Activated CD8-positive, alpha-beta T cell treated with anti-CD3 and anti-CD28 coated beads, Interleukin-2, amount 10 ng/mL, durations not matched to agents 7 days and 5 days (primary cell): ENCODE measurements at regions of chr20 and their contacts with region 1.

Region 1: DNA sequence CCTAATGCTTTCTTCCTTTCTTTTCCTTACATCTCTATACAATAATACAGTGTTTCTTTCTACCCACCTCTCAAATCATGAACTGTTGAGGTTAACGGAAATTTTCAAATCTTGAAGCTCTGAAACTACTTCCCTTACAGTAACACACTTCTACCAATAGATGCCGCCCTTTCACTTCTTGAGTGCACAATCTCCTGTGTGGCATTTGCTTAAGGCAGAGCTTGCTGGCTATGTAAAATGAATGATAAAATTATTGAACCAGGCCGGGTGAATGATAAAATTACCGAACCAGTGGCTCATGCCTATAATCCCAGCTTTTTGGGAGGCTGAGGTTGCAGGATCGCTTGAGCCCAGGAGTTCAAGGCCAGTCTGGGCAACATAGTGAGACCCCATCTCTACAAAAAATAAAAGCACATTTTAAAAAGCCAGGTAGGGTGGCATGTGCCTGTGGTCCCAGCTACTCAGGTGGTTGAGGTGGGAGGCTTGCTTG is 56.8 kb downstream of the KCNS1 start:
- DNase-seq: peak; percentile 67
- ATAC-seq: peak; percentile 83
- H3K4me3 Mint-ChIP-seq: no peak overlapping the region
- H3K27ac Mint-ChIP-seq: peak overlapping the region; percentile 62
- H3K4me1 Mint-ChIP-seq: peaks cover 51% of the 10 kb centered on the region
- H3K27me3 Mint-ChIP-seq: no peaks in the 10 kb centered on the region

Region 2: DNA sequence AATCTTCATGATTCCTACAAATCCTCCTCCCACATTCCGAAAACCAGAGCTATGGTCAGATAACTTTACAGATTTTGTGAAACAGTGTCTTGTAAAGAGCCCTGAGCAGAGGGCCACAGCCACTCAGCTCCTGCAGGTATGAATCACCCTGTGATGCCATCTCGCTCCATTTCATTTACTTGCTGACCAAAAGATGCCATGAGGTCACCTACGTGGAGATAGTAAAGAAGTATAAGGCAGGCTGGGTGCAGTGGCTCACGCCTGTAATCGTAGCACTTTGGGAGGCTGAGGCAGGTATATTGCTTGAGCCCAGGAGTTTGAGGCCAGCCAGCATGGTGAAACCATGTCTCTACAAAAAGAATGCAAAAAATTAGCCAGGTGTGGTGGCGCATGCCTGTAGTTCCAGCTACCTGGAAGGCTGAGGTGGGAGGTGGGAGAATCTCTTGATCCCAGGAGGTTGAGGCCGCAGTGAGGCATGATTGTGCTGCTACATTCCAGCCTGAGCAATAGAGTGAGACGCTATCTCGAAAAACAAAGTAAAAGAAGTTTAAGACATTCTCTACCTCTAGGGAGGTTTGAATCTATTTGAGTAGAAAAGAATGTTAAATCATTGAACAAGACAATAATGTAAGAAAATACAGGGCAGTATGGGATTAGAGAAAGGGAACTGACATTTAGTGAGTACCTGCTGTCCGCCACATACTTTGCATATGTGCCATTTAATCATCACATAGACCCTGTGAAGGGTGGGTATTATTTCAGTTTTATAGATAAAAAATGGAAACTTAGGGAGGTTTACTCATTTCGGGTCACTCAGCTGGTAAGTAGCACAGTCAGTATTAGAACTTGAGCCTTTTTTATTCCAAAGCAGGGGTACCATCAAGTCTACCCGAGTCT is 46.7 kb before region 1 on chr20:
- CTCF ChIA-PET with region 1: interaction called, 11 read pairs
- POLR2A ChIA-PET with region 1: no interaction called
- DNase-seq: no peak
- ATAC-seq: no peak
- H3K4me3 Mint-ChIP-seq: no peak overlapping the region
- H3K27ac Mint-ChIP-seq: peak overlapping the region; percentile 53
- H3K4me1 Mint-ChIP-seq: peaks cover 28% of the 10 kb centered on the region
- H3K27me3 Mint-ChIP-seq: no peaks in the 10 kb centered on the region

Region 3: GRCh38 chr20:45020236-45020886 is 23.8 kb before region 1 on chr20:
- CTCF ChIA-PET with region 1: interaction called, 14 read pairs
- POLR2A ChIA-PET with region 1: no interaction called
- DNase-seq: no peak
- ATAC-seq: no peak
- H3K4me3 Mint-ChIP-seq: no peak overlapping the region
- H3K27ac Mint-ChIP-seq: peak overlapping the region; percentile 50
- H3K4me1 Mint-ChIP-seq: peaks cover 8% of the 10 kb centered on the region
- H3K27me3 Mint-ChIP-seq: no peaks in the 10 kb centered on the region

Region 4: DNA sequence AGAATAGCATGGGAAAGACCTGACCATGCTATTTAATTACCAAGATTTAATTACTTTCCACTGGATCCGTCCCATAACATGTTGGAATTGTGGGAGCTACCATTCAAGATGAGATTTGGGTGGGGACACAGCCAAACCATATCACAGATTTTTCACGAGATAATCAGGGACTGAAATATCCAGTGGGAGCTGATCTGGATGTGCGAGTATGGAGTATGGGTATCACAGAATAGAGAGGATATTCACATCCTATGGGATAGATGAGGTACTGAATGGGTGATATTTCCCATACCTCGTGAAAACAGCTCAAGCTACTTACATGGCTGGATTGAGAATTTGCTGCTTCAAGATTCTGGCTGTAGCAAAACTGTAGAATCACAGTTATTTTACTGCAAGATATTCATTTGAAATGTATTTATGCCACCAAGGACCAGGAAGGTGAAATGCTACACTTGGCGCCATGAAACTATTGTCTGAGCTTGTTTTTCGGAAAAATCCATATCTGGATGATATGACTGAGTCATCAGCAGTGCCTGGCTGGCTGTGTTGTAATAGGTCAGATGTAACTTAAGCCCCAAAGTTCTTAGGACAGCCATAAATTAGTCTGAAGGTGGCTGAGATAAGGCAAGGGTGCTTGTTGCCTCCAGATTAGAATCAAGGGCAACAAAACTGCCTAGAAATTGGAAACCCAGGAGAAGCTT is 27.0 kb after region 1 on chr20:
- CTCF ChIA-PET with region 1: interaction called, 21 read pairs
- POLR2A ChIA-PET with region 1: no interaction called
- DNase-seq: no peak
- ATAC-seq: no peak
- H3K4me3 Mint-ChIP-seq: no peak overlapping the region
- H3K27ac Mint-ChIP-seq: no peak overlapping the region
- H3K4me1 Mint-ChIP-seq: no peaks in the 10 kb centered on the region
- H3K27me3 Mint-ChIP-seq: no peaks in the 10 kb centered on the region

Region 5: GRCh38 chr20:45088247-45088646 is 44.1 kb after region 1 on chr20:
- CTCF ChIA-PET with region 1: interaction called, 489 read pairs
- POLR2A ChIA-PET with region 1: interaction called, 4 read pairs
- DNase-seq: no peak
- ATAC-seq: no peak
- H3K4me3 Mint-ChIP-seq: no peak overlapping the region
- H3K27ac Mint-ChIP-seq: peak overlapping the region; percentile 33
- H3K4me1 Mint-ChIP-seq: peaks cover 4% of the 10 kb centered on the region
- H3K27me3 Mint-ChIP-seq: no peaks in the 10 kb centered on the region

Region 6: DNA sequence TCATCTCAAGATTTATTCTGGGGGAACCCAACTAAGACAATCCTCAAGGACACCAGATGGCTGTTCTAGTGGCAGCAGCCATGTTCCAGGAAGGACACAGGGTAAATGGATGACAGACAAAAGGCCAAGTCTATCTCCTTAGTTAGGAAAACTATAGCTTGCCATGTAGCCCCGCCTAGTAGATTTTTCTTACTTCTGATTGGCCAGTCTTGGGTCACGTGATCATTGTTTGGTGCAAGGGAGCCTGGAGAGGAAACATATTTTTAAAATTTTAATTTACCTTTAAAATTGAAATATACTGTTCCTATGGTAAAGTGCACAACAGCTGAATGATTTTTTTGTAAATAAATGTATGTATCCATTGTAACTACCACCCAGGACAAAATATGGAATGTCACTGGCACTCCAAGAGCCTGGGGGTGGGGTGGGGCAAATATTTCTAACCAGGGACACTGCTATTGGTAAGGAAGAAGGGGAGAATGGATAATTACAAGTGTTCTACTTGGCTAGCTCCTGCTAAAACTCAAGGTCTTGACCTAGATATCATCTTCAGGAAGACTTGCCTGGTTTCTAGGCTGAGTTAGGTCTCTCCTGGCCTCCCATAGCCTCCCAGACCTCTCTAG is 61.3 kb after region 1 on chr20:
- CTCF ChIA-PET with region 1: interaction called, 489 read pairs
- POLR2A ChIA-PET with region 1: no interaction called
- DNase-seq: no peak
- ATAC-seq: no peak
- H3K4me3 Mint-ChIP-seq: no peak overlapping the region
- H3K27ac Mint-ChIP-seq: no peak overlapping the region
- H3K4me1 Mint-ChIP-seq: peaks cover 4% of the 10 kb centered on the region
- H3K27me3 Mint-ChIP-seq: peaks cover 31% of the 10 kb centered on the region